ENCODE measurements at regions of chrX and their contacts with region 1.

Region 1: DNA sequence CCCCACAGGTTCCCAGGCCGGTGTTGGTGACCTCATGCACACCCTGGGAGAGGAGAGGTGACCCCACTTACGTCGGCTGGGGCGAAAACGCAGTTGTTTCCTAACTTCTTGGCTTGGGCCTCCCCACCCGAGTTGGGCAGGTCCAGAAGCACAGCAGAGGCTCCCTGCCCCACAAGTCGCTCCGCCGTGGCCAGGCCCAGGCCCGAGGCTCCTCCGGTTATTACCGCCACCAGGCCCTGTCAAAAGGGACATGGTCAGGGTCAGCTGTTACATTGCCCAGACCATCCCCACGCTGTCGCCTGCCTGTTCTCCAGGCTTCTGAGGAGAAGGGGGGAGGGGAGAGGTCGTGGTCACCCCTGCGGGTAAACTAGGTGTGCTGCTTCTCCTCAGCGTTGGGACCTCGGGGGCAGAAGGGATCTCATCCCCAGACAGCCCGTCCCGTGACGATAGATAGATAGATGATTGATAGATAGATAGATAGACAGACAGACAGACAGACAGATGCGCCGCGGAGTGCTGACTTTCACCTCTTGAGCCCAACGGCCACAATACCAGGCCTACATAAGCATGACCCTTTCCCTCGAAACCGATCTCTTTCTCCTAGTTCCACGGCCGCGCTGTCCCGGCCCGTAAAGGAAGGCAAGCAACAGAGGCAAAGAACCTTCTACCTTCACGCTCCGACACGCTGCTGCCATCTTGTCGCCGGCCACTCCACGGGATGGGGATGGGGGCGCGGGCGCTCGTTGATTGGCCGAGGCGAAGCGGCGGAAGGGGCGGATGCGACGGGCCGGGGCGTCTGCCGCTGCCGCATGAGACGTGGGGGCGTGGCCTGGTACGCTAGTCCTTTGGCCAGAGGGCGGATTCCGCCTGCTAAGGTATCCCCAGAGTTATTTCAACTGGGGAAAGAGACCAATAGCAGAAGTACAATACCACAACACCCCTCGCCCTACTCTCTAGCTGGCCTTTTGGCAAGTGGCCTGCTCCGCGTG is at the start of gene HSD17B10:
- DNase-seq: peak; percentile 91
- H3K4me3 ChIP-seq: peak within 1 kb of the TSS; percentile 96
- H3K27ac ChIP-seq: peak within 1 kb of the TSS; percentile 52
- H3K4me1 ChIP-seq: peaks cover 15% of the 10 kb centered on the region
- CTCF ChIP-seq: no peak
- total RNA-seq, gene HSD17B10: 106 and 107 TPM in 2 replicates

Region 2: GRCh38 chrX:53422086-53422860 is 11.7 kb before region 1 on chrX and contains the start of gene SMC1A:
- CTCF ChIA-PET with region 1: no interaction called
- POLR2A ChIA-PET with region 1: interaction called, 4 read pairs
- intact Hi-C with region 1: loop called (anchors 1 kb)
- DNase-seq: peak; percentile 95
- H3K4me3 ChIP-seq: peak within 1 kb of the TSS; percentile 83
- H3K27ac ChIP-seq: peak within 1 kb of the TSS; percentile 98
- H3K4me1 ChIP-seq: peaks cover 9% of the 10 kb centered on the region
- CTCF ChIP-seq: no peak
- total RNA-seq, gene SMC1A: 41.6 and 65.0 TPM in 2 replicates

Measured in OCI-LY7 (cell line).